ENCODE measurements at regions of chr20 and their contacts with region 1.

Region 1: DNA sequence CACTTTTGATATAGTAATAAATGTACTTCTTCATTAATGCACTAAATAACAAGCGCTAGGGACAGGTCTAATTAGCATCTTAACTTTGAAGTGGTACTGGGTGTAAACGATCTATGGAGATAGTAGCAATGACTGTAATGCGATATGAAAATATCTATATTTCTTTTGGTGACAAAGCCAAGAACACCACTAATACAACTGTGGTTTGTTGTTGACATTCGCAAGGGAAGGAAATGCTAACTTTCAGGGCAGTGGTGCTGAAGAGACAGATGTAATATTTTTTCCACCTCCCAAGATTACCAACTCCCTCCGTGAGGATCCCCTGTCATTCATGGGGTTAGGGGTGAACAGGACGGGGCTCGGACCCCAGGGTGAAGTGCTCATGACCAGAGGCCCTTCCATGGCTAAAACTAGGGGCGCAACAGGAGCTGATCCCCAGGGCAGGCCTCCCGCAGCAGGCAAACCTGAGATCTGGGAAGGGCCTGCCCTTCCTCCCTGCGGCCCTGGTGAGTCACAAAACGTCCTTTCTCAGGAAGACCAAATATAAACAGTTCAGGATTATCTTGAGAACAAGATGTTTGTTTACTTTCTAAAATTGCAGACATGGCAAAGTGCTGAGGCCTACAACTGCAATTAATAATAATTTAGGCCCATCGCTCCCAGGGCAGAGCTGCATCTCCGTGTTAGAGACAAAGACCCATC is 65.0 kb upstream of the TOX2 start:
- DNase-seq: peak; percentile 31
- H3K4me3 ChIP-seq: no peak overlapping the region
- H3K27me3 ChIP-seq: no peaks in the 10 kb centered on the region
- CTCF ChIP-seq: no peak

Region 2: DNA sequence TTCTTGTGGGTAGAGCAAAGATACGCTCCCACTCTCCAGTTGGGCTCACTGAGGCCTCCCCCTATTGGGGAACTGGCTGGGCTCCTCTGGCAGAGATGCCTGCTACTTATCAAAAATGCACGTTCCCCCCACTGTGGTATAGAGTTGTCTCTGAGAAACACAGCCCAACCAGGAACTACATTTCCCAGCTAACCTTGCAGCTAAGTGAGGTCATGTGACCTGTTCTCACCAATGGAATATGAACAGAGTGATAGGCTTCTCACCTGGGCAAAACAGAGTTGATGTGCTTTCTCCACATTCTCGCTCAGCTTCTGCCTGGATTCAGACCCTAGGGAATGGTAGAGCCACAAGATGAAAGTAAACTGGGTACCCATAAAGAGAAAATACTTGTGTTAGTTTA is 610.8 kb before region 1 on chr20:
- CTCF ChIA-PET with region 1: no interaction called
- POLR2A ChIA-PET with region 1: no interaction called
- DNase-seq: no peak
- H3K4me3 ChIP-seq: no peak overlapping the region
- H3K27me3 ChIP-seq: no peaks in the 10 kb centered on the region
- CTCF ChIP-seq: no peak

Region 3: GRCh38 chr20:43824309-43825050 is 25.2 kb before region 1 on chr20:
- CTCF ChIA-PET with region 1: no interaction called
- POLR2A ChIA-PET with region 1: no interaction called
- DNase-seq: no peak
- H3K4me3 ChIP-seq: no peak overlapping the region
- H3K27me3 ChIP-seq: peaks cover 14% of the 10 kb centered on the region
- CTCF ChIP-seq: no peak

Region 4: DNA sequence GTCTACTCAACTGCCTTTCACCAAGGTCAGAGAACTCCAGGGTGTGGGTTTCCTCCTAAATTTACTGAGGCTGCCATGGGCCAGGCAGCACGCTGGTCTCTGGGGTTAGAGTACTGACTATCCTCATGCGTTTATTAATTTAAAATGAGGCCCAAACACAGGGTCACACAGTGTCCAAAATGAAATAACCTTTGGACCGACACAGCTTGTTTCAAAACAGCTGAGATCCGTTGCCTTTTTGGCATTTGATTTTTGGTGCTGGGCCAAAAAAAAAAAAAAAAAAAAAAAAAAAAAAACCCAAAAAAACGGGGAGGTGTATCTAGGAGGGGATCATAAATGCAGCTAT is 50.4 kb after region 1 on chr20:
- CTCF ChIA-PET with region 1: no interaction called
- POLR2A ChIA-PET with region 1: interaction called, 26 read pairs
- DNase-seq: no peak
- H3K4me3 ChIP-seq: no peak overlapping the region
- H3K27me3 ChIP-seq: no peaks in the 10 kb centered on the region
- CTCF ChIP-seq: no peak

Region 5: DNA sequence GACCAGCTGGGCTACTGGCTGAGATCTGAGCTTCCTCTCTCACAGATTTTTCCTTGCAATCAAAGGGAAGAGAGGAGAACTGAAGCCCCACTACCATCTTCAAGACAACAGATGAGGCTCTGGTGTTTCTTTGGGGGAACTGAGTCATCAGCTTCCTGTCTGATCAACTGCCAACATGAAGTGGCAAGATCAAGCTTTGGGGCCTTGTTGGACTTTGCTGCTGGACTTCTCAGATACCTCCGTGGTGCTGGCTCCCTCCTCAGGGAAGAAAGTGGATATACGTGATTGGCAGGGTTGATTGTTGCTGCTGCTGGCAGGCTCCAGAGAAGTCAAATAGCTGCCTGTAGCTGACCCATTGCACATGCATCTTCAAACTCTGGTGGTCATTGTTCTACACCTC is 61.4 kb after region 1 on chr20:
- CTCF ChIA-PET with region 1: no interaction called
- POLR2A ChIA-PET with region 1: no interaction called
- DNase-seq: no peak
- H3K4me3 ChIP-seq: no peak overlapping the region
- H3K27me3 ChIP-seq: no peaks in the 10 kb centered on the region
- CTCF ChIP-seq: no peak

Measured in BJ (cell line).